CD4-positive, alpha-beta T cell (primary cell): ENCODE measurements at regions of chr2 and their contacts with region 1.

Region 1: GRCh38 chr2:170973492-170974303 is 44.6 kb downstream of the GORASP2 start:
- DNase-seq: peak; percentile 81 to 96 (median 84)
- ATAC-seq: peak; percentile 93
- H3K4me3 ChIP-seq: peak overlapping the region; percentile 86
- H3K4me3 Mint-ChIP-seq: peak overlapping the region; percentile 86
- H3K27ac ChIP-seq: peak overlapping the region in 1 of 2 donors; percentile 41
- H3K27ac Mint-ChIP-seq: peak overlapping the region; percentile 54
- H3K4me1 ChIP-seq: peaks cover 16% of the 10 kb centered on the region
- H3K4me1 Mint-ChIP-seq: peaks cover 12% of the 10 kb centered on the region
- H3K27me3 ChIP-seq: no peaks in the 10 kb centered on the region
- H3K27me3 Mint-ChIP-seq: no peaks in the 10 kb centered on the region
- CTCF ChIP-seq: peak; percentile 72

Region 2: GRCh38 chr2:171042253-171042969 is 68.7 kb after region 1 on chr2:
- CTCF ChIA-PET with region 1: no interaction called
- POLR2A ChIA-PET with region 1: no interaction called
- intact Hi-C with region 1: no loop called
- DNase-seq: peak in 2 of 14 experiments; percentile 23 to 54
- ATAC-seq: peak; percentile 57
- H3K4me3 ChIP-seq: no peak overlapping the region
- H3K4me3 Mint-ChIP-seq: peak overlapping the region; percentile 14
- H3K27ac ChIP-seq: peak overlapping the region in 1 of 2 donors; percentile 31
- H3K27ac Mint-ChIP-seq: peak overlapping the region; percentile 85
- H3K4me1 ChIP-seq: peaks cover 11% of the 10 kb centered on the region
- H3K4me1 Mint-ChIP-seq: peaks cover 32% of the 10 kb centered on the region
- H3K27me3 ChIP-seq: no peaks in the 10 kb centered on the region
- H3K27me3 Mint-ChIP-seq: no peaks in the 10 kb centered on the region
- CTCF ChIP-seq: no peak

Region 3: DNA sequence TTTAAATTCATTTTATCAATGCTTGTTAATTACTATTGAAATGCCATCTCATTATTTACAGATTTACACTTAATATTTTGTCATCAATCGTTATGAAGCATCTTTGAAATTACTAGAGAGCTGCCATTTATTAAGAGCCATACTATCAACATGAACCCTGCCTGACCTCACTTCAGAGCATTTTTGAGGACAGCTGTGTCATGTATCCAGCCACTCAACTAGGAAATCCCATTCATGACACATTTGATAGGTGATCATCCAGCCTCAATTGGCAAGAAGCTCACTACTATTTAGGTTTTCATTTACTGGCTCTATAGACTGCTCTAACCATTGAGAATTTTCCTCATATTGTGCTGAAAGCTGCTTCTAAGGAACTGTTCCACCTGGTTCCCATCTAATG is 227.6 kb after region 1 on chr2:
- CTCF ChIA-PET with region 1: no interaction called
- POLR2A ChIA-PET with region 1: no interaction called
- intact Hi-C with region 1: no loop called
- DNase-seq: no peak
- ATAC-seq: no peak
- H3K4me3 ChIP-seq: no peak overlapping the region
- H3K4me3 Mint-ChIP-seq: no peak overlapping the region
- H3K27ac ChIP-seq: no peak overlapping the region
- H3K27ac Mint-ChIP-seq: no peak overlapping the region
- H3K4me1 ChIP-seq: no peaks in the 10 kb centered on the region
- H3K4me1 Mint-ChIP-seq: no peaks in the 10 kb centered on the region
- H3K27me3 ChIP-seq: no peaks in the 10 kb centered on the region
- H3K27me3 Mint-ChIP-seq: no peaks in the 10 kb centered on the region
- CTCF ChIP-seq: no peak

Region 4: DNA sequence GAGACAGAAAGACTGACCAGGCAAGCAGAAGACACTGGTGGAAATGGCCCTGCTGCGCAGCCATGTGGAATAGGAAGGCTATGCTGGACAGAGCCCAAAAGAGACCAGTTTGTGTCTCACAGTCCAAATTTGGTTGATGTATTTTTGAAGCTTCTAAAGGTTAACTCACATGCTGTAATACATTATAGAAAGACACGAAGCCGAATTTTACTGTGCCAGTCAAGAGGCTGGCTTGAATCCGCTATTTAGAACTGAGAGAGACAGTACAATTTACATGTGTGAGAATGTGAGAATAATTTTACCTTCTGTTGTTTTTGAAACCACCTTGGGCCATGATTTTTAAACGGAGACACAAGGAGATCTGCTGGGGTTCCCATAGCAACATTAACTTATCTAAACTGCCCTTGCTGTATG is 346.5 kb after region 1 on chr2:
- CTCF ChIA-PET with region 1: no interaction called
- POLR2A ChIA-PET with region 1: no interaction called
- intact Hi-C with region 1: loop called in 1 of 2 experiments (anchors 10 kb)
- DNase-seq: no peak
- ATAC-seq: no peak
- H3K4me3 ChIP-seq: no peak overlapping the region
- H3K4me3 Mint-ChIP-seq: peak overlapping the region; percentile 4
- H3K27ac ChIP-seq: no peak overlapping the region
- H3K27ac Mint-ChIP-seq: peak overlapping the region; percentile 73
- H3K4me1 ChIP-seq: peaks cover 35% of the 10 kb centered on the region
- H3K4me1 Mint-ChIP-seq: peaks cover 50% of the 10 kb centered on the region
- H3K27me3 ChIP-seq: no peaks in the 10 kb centered on the region
- H3K27me3 Mint-ChIP-seq: no peaks in the 10 kb centered on the region
- CTCF ChIP-seq: no peak